ENCODE measurements at regions of chr2 and their contacts with region 1.

Region 1: DNA sequence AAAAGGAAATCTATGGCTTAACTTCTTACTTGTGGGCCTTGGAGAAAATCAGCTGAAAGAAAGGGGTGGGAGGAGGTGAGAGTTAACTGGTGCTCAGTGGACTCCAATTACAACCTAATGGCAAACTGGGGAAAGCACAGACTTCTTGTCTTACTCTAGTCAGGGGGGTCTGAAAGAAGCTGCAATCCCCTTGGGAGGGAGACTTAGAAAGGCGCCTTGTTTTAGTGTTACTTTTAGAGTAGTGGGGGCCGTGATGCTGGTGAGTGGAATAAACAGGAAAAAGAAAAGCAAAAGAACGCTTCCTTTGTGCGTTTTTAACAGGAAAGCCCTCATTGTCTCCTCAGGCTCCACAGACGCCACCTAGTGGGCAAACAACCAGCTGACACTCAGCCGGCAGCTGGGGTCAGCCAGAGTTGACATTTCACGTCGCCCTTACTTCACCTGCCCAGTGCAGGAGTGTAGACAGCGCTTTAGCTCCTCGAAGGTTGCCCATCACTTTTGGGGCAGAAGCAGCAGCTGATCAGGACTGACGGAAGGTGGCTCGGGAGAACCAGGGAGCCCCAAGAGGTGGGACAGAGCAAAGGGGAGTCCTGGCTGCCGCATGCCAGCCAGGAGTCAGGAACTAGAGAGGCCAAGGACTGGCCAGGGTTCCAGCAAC is 55.9 kb upstream of the GORASP2 start:
- DNase-seq: peak; percentile 81
- H3K4me3 ChIP-seq: peak overlapping the region; percentile 15 to 46; a peak in 3 of 4 replicates
- H3K27ac ChIP-seq: no peak overlapping the region
- H3K4me1 ChIP-seq: peaks cover 0 to 3% of the 10 kb centered on the region in 2 experiments; a peak in 1 of 4 replicates
- H3K27me3 ChIP-seq: no peaks in the 10 kb centered on the region
- CTCF ChIP-seq: peak; percentile 97
- EP300 ChIP-seq: no peak
- RAD21 ChIP-seq: peak; percentile 63

Region 2: GRCh38 chr2:170324640-170325046 is 548.5 kb before region 1 on chr2:
- CTCF ChIA-PET with region 1: interaction called, 13 read pairs
- POLR2A ChIA-PET with region 1: no interaction called
- DNase-seq: peak; percentile 24
- H3K4me3 ChIP-seq: peak overlapping the region in 1 of 2 experiments; percentile 31; a peak in 1 of 4 replicates
- H3K27ac ChIP-seq: no peak overlapping the region
- H3K4me1 ChIP-seq: no peaks in the 10 kb centered on the region
- H3K27me3 ChIP-seq: no peaks in the 10 kb centered on the region
- CTCF ChIP-seq: peak; percentile 62
- EP300 ChIP-seq: no peak
- RAD21 ChIP-seq: peak; percentile 83

Region 3: DNA sequence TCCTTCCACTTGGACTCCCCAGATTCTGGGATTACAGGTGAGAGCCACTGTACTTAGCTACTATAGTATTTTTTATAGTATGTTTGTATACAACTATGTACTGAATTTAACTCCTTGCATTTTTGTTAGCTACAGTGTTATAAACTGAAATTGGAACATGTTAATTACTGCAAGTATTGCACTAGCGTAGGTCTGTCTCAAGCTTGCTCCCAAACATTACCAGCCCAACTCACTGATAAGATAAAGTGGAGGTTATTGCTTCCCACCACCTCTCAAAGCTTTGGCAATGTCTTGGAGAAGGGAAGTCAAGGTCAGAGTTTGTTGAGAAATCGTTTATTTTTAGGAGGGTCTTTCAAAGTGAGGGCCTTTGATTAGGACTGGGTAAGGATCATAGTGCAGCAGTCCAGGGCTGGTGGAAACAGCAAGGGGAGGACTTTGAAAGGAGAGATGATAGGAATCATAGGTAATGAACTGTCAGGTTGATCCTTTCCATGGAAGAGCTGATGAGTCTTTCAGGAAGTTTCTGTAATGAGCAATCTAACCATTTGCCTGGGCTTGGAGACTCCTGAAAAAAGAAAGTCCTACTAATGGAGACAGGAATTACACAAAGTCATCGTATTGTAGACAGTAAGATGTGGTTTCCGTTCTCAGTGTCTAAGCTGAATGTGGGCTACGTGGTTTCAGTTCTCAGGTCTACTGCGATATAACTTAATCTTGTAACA is 438.1 kb before region 1 on chr2:
- CTCF ChIA-PET with region 1: no interaction called
- POLR2A ChIA-PET with region 1: no interaction called
- DNase-seq: no peak
- H3K4me3 ChIP-seq: no peak overlapping the region
- H3K27ac ChIP-seq: no peak overlapping the region
- H3K4me1 ChIP-seq: no peaks in the 10 kb centered on the region
- H3K27me3 ChIP-seq: no peaks in the 10 kb centered on the region
- CTCF ChIP-seq: no peak
- EP300 ChIP-seq: no peak
- RAD21 ChIP-seq: no peak

Region 4: GRCh38 chr2:170845343-170845742 is 27.8 kb before region 1 on chr2:
- CTCF ChIA-PET with region 1: interaction called, 17 read pairs
- POLR2A ChIA-PET with region 1: no interaction called
- DNase-seq: no peak
- H3K4me3 ChIP-seq: no peak overlapping the region
- H3K27ac ChIP-seq: no peak overlapping the region
- H3K4me1 ChIP-seq: peaks cover 0 to 5% of the 10 kb centered on the region in 2 experiments; a peak in 1 of 4 replicates
- H3K27me3 ChIP-seq: no peaks in the 10 kb centered on the region
- CTCF ChIP-seq: peak; percentile 40
- EP300 ChIP-seq: no peak
- RAD21 ChIP-seq: no peak

Region 5: GRCh38 chr2:170851635-170852034 is 21.5 kb before region 1 on chr2:
- CTCF ChIA-PET with region 1: interaction called, 17 read pairs
- POLR2A ChIA-PET with region 1: no interaction called
- DNase-seq: no peak
- H3K4me3 ChIP-seq: no peak overlapping the region
- H3K27ac ChIP-seq: no peak overlapping the region
- H3K4me1 ChIP-seq: no peaks in the 10 kb centered on the region
- H3K27me3 ChIP-seq: no peaks in the 10 kb centered on the region
- CTCF ChIP-seq: no peak
- EP300 ChIP-seq: no peak
- RAD21 ChIP-seq: no peak

Region 6: DNA sequence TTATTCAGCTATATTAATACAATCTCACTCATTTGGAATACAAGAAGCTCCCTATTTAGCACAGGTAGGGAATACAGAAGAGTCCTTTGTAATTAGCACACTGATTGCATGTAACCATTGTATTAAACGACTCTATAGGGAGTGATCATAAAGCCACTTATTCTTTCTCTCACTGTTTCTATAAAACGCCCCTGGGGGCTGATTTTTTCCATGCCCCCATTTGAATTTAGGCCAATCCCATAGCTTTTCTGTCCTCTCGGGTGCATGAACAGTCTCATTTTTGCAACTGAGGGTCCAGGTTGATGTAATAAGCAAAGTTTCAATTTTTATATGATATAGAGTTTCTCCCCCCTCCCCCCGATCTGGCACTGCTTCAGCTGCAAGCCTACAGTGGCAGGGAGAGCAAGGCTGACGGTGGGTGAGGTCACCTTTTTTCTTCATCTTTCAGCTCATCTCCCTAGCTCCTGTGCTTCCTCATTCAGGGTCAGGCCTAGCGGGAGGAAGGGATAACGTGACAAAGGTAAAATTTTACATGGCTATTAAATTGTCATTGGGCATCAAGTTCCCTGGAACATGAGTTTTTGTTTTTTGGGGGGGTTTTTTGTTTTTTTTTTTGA is 10.8 kb before region 1 on chr2:
- CTCF ChIA-PET with region 1: interaction called, 35 read pairs
- POLR2A ChIA-PET with region 1: no interaction called
- DNase-seq: no peak
- H3K4me3 ChIP-seq: no peak overlapping the region
- H3K27ac ChIP-seq: no peak overlapping the region
- H3K4me1 ChIP-seq: no peaks in the 10 kb centered on the region
- H3K27me3 ChIP-seq: no peaks in the 10 kb centered on the region
- CTCF ChIP-seq: no peak
- EP300 ChIP-seq: no peak
- RAD21 ChIP-seq: no peak

Region 7: GRCh38 chr2:170886386-170886785 is 13.2 kb after region 1 on chr2:
- CTCF ChIA-PET with region 1: interaction called, 41 read pairs
- POLR2A ChIA-PET with region 1: no interaction called
- DNase-seq: no peak
- H3K4me3 ChIP-seq: no peak overlapping the region
- H3K27ac ChIP-seq: peak overlapping the region in 1 of 2 experiments; percentile 54; a peak in 3 of 4 replicates
- H3K4me1 ChIP-seq: peaks cover 0 to 8% of the 10 kb centered on the region in 2 experiments; a peak in 2 of 4 replicates
- H3K27me3 ChIP-seq: no peaks in the 10 kb centered on the region
- CTCF ChIP-seq: no peak
- EP300 ChIP-seq: peak in 1 of 2 experiments; percentile 89; a peak in 2 of 4 replicates
- RAD21 ChIP-seq: no peak

Region 8: DNA sequence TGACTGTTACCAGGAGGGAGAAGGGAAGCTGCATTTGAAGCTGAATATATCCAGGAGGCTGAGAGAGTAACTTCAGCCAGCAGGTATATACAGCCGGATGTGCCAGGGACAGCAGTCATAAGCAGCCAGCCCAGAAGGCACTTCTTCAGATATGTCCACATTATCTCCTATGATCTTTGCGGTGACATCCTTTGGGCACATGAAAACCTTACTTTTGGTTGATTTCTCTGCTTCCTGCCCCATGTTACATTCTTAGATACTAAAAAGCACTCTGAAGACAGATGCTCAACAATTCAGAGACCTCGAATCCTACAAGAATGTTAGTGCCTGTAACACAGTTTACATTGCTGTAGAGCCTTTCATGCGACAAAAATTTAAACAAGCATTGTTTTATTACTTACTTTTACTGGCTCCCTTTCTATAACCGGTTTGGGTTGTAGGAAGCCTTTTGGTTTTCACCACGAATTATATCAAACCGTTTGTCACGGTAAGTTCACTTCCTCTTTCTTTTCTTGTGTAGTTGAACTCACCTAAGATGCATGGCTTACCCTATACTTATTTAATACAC is 337.8 kb after region 1 on chr2:
- CTCF ChIA-PET with region 1: no interaction called
- POLR2A ChIA-PET with region 1: no interaction called
- DNase-seq: no peak
- H3K4me3 ChIP-seq: no peak overlapping the region
- H3K27ac ChIP-seq: no peak overlapping the region
- H3K4me1 ChIP-seq: no peaks in the 10 kb centered on the region
- H3K27me3 ChIP-seq: no peaks in the 10 kb centered on the region
- CTCF ChIP-seq: no peak
- EP300 ChIP-seq: no peak
- RAD21 ChIP-seq: no peak

Measured in SK-N-SH (cell line).